BJ (cell line): ENCODE measurements at regions of chr20 and their contacts with region 1.

Region 1: DNA sequence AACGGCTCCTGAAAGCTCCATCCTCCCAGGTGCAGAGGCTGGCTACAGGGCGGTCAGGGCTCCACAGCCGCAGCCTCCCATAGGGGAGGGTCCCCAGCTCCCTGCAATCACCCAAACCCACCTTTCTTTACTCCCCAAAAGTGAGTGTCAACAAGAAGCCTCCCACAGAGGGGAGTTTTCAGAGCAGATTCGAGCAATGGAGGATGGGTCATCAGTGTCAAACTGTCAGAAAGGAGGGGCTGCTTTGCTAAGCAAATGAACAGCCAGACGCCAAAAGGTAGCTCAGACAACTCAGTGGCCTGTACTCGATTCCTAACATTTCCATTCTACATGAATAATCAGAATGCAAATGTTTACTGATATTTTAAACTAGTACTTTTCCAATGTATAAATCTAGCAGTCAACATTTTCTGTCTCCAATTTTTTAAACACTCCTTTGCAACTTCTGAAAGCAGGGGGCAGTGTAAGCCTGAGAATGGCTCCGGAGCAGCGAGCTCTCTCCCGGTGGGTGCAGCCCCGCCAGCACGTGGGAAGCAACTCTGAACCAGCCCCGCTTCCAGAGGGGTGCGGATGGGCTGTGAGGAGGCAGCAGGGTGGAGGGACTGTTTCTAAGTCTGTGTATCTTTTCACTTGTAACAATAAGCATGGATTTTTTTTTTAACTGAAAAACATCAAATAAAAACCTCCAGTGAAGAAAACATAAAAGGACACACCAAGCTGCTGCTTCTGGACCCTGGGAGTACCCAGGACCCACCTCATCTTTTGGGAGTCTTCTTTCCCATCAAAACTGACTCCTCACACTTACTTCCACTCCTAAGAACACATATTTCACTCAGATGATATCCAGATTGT is 54.9 kb downstream of the TAF4 start:
- DNase-seq: no peak
- H3K4me3 ChIP-seq: no peak overlapping the region
- H3K27me3 ChIP-seq: no peaks in the 10 kb centered on the region
- CTCF ChIP-seq: peak; percentile 67

Region 2: GRCh38 chr20:61949714-61950640 is 60.8 kb before region 1 on chr20:
- CTCF ChIA-PET with region 1: no interaction called
- POLR2A ChIA-PET with region 1: no interaction called
- DNase-seq: no peak
- H3K4me3 ChIP-seq: no peak overlapping the region
- H3K27me3 ChIP-seq: peaks cover 2% of the 10 kb centered on the region; the same call in 1 of the 2 replicates
- CTCF ChIP-seq: no peak

Region 3: DNA sequence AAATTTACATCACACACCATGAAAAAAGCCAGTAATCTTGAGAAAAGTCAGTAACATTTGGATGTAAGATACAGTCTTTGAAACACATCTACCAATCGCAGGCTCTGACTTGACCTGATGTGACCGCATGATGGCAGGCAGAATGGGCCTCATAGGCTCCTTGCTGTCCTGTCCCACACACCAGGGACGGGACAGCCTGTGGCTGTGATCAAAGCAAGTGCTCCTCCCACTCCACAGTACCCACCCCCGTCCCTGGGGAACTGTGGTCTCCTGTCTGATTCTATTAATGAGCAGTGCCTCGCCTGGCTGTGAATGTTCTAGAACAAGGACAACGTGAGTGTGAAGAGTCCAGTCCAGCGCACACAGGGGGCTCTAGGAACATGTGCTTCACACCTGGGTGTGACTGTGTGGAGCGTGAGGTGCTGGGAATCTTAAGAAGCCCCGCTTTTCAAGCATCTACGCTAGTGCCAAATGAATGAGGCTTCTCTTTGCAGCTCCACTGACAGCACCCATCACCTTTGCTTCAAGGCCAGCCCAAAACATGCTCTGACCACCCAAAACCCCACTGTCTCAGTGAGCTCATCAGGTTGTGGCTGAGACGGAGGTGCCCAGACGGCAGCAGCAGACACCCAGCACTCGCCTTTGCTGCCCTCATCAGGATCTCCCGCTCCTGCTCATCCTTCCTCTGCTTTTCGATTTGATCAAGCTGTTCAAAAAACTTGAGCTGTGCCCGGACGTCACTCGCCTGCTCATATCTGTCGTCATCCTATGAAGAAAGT is 12.2 kb before region 1 on chr20:
- CTCF ChIA-PET with region 1: interaction called, 12 read pairs
- POLR2A ChIA-PET with region 1: no interaction called
- DNase-seq: no peak
- H3K4me3 ChIP-seq: no peak overlapping the region
- H3K27me3 ChIP-seq: no peaks in the 10 kb centered on the region
- CTCF ChIP-seq: no peak

Region 4: GRCh38 chr20:62025832-62026563 is 15.2 kb after region 1 on chr20:
- CTCF ChIA-PET with region 1: interaction called, 16 read pairs
- POLR2A ChIA-PET with region 1: no interaction called
- DNase-seq: peak; percentile 12
- H3K4me3 ChIP-seq: no peak overlapping the region
- H3K27me3 ChIP-seq: no peaks in the 10 kb centered on the region
- CTCF ChIP-seq: peak; percentile 90

Region 5: GRCh38 chr20:62136283-62137091 is 125.7 kb after region 1 on chr20:
- CTCF ChIA-PET with region 1: interaction called, 33 read pairs
- POLR2A ChIA-PET with region 1: no interaction called
- DNase-seq: no peak
- H3K4me3 ChIP-seq: no peak overlapping the region
- H3K27me3 ChIP-seq: no peaks in the 10 kb centered on the region
- CTCF ChIP-seq: peak; percentile 90

Region 6: GRCh38 chr20:62142245-62143117 is 131.7 kb after region 1 on chr20:
- CTCF ChIA-PET with region 1: interaction called, 33 read pairs
- POLR2A ChIA-PET with region 1: no interaction called
- DNase-seq: no peak
- H3K4me3 ChIP-seq: peak overlapping the region; percentile 69
- H3K27me3 ChIP-seq: no peaks in the 10 kb centered on the region
- CTCF ChIP-seq: no peak

Region 7: GRCh38 chr20:62156592-62157386 is 146.0 kb after region 1 on chr20:
- CTCF ChIA-PET with region 1: interaction called, 14 read pairs
- POLR2A ChIA-PET with region 1: no interaction called
- DNase-seq: no peak
- H3K4me3 ChIP-seq: no peak overlapping the region
- H3K27me3 ChIP-seq: no peaks in the 10 kb centered on the region
- CTCF ChIP-seq: peak; percentile 81